AG04450 (cell line): ENCODE measurements at regions of chr4 and their contacts with region 1.

Region 1: GRCh38 chr4:70183168-70183939 is 12.2 kb upstream of the ODAM start:
- DNase-seq: peak; percentile 1
- H3K4me3 ChIP-seq: no peak overlapping the region
- H3K27ac ChIP-seq: no peak overlapping the region
- H3K27me3 ChIP-seq: no peaks in the 10 kb centered on the region
- CTCF ChIP-seq: peak; percentile 76

Region 2: DNA sequence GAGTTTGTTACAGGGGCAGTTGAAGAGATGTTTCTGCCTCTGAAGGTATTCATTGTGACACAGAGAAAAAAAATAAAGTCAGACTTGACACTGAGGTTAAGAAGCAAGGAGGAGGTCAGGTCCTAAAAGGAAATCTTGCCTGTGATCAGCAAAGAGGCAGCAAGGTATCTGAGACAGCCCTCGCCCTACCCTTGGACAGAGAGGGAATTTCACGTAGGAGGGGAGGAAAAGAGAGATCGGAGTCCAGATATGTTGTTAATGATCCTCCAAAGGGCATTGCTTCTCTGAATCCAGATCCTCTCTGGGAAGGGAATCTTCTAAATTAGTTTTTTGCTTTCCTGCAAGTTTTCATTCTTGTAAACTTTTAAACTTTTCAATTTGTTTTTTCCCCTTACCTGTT is 44.6 kb before region 1 on chr4:
- CTCF ChIA-PET with region 1: no interaction called
- POLR2A ChIA-PET with region 1: no interaction called
- DNase-seq: no peak
- H3K4me3 ChIP-seq: no peak overlapping the region
- H3K27ac ChIP-seq: no peak overlapping the region
- H3K27me3 ChIP-seq: no peaks in the 10 kb centered on the region
- CTCF ChIP-seq: no peak

Region 3: GRCh38 chr4:70158576-70158975 is 24.8 kb before region 1 on chr4:
- CTCF ChIA-PET with region 1: interaction called, 11 read pairs
- POLR2A ChIA-PET with region 1: no interaction called
- DNase-seq: no peak
- H3K4me3 ChIP-seq: no peak overlapping the region
- H3K27ac ChIP-seq: no peak overlapping the region
- H3K27me3 ChIP-seq: no peaks in the 10 kb centered on the region
- CTCF ChIP-seq: no peak

Region 4: GRCh38 chr4:70197842-70198241 is 14.5 kb after region 1 on chr4:
- CTCF ChIA-PET with region 1: interaction called, 12 read pairs
- POLR2A ChIA-PET with region 1: no interaction called
- DNase-seq: no peak
- H3K4me3 ChIP-seq: no peak overlapping the region
- H3K27ac ChIP-seq: no peak overlapping the region
- H3K27me3 ChIP-seq: no peaks in the 10 kb centered on the region
- CTCF ChIP-seq: no peak

Region 5: DNA sequence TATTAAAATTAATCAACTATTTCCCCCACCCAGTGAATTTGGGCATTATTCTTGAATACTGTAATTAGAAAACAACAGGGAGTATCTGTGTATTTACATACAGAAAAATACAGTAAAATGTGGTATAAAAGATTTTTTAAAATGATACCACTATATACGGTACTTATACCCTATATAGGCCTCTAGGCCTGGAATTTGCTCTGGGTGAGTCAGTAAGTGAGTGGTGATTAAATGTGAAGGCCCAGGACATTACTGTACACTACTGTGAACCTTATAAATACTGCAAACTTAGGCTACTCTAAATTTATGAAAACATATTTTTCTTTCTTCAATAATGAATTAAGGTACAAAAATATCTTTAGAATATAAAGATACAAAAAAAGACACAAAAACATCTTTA is 52.8 kb after region 1 on chr4:
- CTCF ChIA-PET with region 1: no interaction called
- POLR2A ChIA-PET with region 1: no interaction called
- DNase-seq: no peak
- H3K4me3 ChIP-seq: no peak overlapping the region
- H3K27ac ChIP-seq: no peak overlapping the region
- H3K27me3 ChIP-seq: no peaks in the 10 kb centered on the region
- CTCF ChIP-seq: no peak